ENCODE measurements at regions of chr3 and their contacts with region 1.

Region 1: DNA sequence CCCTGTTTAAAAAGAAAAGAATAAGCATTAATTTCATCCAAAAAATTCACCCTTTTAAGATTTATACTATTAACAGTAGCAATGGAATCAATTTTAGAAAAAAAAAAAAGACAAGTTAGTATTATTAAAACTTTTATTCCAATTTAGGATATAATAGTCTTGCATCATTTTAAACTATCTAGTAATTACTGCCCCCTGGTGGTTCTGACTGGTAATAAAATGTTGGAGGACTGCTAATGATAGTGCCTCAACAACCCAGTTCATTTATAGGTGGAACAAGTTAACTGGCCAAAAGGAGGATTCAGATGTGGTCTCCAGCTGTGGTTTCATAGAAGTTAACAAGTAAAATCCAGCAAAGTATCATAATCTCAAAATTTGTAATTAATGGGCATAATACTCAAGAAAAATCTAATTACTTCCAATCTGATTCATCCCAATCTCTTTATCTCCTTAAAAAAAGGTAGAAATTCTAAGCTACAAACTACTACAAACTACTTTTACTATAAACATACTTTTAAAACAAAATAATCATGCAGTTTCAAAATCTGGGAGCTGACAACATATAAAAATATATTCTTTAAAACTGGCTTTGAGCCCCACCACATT is 30.7 kb upstream of the WDR49 start:
- DNase-seq: peak; percentile 2
- H3K4me3 ChIP-seq: no peak overlapping the region
- CTCF ChIP-seq: peak; percentile 40

Region 2: GRCh38 chr3:167167491-167167890 is 517.0 kb before region 1 on chr3:
- CTCF ChIA-PET with region 1: no interaction called
- POLR2A ChIA-PET with region 1: no interaction called
- DNase-seq: no peak
- H3K4me3 ChIP-seq: no peak overlapping the region
- CTCF ChIP-seq: no peak

Region 3: DNA sequence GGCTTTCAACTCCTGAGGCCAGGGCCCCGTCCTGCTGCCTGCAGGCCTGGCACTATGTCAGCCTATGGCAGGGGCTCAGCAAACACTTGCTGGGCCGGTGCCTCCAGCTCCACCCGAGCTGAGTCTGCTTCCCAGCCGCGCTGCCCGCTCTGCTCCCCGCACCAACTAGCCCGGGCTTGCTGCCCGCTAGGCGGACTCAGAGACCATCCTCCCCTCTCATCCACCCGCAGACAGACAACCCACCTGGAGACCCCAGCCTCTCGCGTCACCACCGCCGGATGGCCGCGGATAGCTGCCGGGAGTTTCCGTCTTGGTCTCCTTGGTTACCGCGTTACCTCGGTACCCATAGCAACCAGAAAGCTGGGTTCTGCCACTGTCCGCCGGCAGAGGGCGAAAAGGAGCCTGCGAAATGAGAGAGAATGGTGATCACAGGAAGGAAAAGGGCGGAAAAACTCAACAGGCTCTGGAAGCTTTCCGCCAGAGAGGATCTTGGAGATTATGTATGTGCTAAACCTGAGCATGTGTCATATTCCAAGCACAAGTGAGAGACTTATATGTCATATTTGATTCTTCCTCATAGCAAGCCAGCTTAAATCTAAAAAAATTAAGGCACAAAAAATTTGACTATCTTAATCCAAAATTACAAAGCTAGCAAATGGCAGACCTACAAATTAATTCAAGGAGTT is 304.3 kb before region 1 on chr3 and contains the start of gene ZBBX:
- CTCF ChIA-PET with region 1: interaction called, 10 read pairs
- POLR2A ChIA-PET with region 1: no interaction called
- DNase-seq: no peak
- H3K4me3 ChIP-seq: peak within 1 kb of the TSS; percentile 54
- CTCF ChIP-seq: peak; percentile 79

Region 4: DNA sequence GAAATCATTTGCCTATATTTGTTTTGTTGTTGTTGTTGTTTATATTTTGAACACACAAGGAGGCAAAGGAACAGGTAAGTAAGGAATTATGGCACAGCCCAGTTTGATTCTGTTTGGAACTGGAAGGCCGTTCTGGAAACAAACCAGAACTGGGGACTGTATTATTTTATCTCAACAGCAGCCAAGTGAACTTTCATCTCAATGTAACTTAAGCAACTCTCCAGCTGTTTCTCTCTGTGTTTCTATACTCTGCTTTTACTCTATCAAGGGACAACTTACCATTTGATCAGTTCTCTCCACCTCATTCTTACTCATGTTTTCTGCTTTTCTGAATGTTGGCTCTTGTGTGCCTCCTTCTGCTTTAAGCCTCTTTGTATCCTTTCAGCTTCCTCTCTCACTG is 14.8 kb before region 1 on chr3:
- CTCF ChIA-PET with region 1: interaction called, 46 read pairs
- POLR2A ChIA-PET with region 1: no interaction called
- DNase-seq: no peak
- H3K4me3 ChIP-seq: no peak overlapping the region
- CTCF ChIP-seq: no peak

Region 5: GRCh38 chr3:167705840-167706239 is 21.3 kb after region 1 on chr3:
- CTCF ChIA-PET with region 1: interaction called, 38 read pairs
- POLR2A ChIA-PET with region 1: no interaction called
- DNase-seq: no peak
- H3K4me3 ChIP-seq: no peak overlapping the region
- CTCF ChIP-seq: no peak